ENCODE measurements at regions of chr9 and their contacts with region 1.

Region 1: DNA sequence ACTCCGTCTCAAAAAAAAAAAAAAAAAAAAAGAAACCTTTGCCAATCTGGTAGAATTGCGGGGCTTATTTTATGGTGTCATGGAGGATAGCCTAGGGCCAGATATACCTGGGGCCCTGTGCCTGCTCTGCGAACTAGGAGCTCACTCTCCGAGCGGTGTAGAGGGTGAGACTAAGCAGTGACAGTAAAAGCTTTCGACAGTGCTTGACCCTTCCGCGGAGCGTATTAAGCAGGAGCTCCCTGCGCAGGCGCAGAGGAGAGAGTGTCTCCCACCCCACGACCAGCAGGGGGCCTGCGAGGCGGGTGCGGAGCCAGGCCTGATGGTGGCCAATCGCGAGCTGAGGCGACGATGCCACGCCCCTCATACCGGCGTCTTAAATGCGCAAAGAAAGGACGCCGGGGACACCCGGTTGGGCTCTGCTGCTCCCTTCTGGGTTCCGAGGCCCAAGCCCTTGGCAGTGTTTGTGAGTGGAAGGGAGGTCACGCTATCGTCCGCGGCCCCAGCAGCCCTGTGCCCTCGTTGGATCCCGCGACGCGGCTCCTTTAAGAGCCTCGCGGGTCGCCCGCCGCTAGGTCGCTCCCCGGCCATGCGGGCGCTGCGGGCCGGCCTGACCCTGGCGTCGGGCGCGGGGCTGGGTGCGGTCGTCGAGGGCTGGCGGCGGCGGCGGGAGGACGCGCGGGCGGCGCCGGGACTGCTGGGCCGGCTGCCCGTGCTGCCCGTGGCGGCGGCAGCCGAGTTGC is at the start of gene ENDOG:
- DNase-seq: peak; percentile 98
- H3K4me3 Mint-ChIP-seq: peak within 1 kb of the TSS; percentile 82
- H3K27ac Mint-ChIP-seq: peak within 1 kb of the TSS; percentile 24
- H3K4me1 Mint-ChIP-seq: peaks cover 22% of the 10 kb centered on the region
- H3K27me3 Mint-ChIP-seq: no peaks in the 10 kb centered on the region
- total RNA-seq, gene ENDOG: 9.9 to 10.3 TPM

Region 2: DNA sequence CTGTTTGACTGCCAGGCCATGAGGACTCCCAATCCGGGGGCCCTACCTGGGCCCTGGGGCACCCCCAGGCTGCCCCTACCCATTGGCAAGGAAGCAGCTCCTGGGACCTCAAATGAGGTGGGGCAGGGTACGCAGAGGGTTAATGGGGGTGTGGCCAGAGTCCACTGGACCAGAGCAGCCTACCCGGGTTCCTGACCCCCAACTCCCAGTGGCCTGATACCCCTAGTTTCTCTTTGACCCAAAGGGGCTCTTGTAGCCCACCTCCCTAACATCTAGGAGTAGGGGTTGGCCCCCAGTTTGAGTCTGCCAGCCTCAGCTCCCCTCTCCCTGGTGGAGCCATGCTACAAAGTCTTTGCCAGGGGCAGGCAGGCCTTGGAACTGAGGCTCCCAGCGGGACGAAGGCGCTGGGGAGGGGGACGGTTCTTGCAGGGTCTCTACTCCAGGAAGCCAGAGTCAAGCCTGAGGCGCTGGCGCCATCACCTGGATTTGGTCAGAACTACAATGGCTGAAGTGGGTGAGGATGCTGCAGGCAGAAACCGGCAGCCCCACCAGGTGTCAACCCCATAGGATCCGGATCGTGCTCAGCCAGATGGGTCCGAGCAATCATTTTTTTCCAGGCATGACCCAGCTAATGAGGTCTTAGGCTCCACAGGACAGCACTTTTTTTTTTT is 406.0 kb before region 1 on chr9:
- CTCF ChIA-PET with region 1: no interaction called
- intact Hi-C with region 1: no loop called
- DNase-seq: peak; percentile 78
- H3K4me3 Mint-ChIP-seq: no peak overlapping the region
- H3K27ac Mint-ChIP-seq: no peak overlapping the region
- H3K4me1 Mint-ChIP-seq: no peaks in the 10 kb centered on the region
- H3K27me3 Mint-ChIP-seq: peaks cover 51% of the 10 kb centered on the region

Region 3: DNA sequence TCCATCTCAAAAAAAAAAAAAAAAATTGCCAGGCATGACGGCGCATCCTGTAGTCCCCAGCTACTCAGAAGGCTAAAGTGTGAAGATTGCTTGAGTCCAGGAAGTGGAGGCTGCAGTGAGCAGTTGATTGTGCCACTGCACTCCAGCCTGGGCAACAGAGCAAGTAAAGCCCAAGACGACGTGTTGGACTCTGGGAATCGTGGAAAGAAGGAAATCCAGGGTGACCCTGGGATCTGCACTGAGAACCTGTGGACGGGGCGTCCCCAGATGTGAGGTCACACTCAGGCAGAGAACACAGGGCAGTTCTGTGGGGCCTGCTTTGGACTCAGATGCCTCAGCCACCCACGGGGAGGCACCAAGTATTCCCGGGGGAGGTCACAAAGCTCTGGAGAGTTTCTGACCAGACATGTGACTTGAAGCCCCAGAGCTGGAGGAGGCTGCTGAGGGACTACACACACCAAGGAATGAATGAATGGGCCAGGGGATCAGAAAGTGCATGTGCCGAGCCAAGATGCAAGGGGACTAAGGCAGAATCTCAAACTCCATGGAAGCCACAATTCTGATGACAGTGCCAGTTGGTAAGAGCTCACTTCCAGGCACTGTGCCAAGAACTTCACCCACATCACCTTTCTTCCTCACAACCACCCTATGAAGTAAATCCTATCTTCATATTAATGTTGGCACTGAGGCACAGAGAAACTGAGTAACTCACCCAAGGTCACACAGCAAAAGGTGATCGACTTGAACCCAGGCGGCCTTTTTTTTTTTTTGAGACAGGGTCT is 174.6 kb before region 1 on chr9:
- CTCF ChIA-PET with region 1: interaction called, 6 read pairs
- intact Hi-C with region 1: loop called (anchors 2 kb)
- DNase-seq: no peak
- H3K4me3 Mint-ChIP-seq: no peak overlapping the region
- H3K27ac Mint-ChIP-seq: no peak overlapping the region
- H3K4me1 Mint-ChIP-seq: no peaks in the 10 kb centered on the region
- H3K27me3 Mint-ChIP-seq: no peaks in the 10 kb centered on the region

Region 4: DNA sequence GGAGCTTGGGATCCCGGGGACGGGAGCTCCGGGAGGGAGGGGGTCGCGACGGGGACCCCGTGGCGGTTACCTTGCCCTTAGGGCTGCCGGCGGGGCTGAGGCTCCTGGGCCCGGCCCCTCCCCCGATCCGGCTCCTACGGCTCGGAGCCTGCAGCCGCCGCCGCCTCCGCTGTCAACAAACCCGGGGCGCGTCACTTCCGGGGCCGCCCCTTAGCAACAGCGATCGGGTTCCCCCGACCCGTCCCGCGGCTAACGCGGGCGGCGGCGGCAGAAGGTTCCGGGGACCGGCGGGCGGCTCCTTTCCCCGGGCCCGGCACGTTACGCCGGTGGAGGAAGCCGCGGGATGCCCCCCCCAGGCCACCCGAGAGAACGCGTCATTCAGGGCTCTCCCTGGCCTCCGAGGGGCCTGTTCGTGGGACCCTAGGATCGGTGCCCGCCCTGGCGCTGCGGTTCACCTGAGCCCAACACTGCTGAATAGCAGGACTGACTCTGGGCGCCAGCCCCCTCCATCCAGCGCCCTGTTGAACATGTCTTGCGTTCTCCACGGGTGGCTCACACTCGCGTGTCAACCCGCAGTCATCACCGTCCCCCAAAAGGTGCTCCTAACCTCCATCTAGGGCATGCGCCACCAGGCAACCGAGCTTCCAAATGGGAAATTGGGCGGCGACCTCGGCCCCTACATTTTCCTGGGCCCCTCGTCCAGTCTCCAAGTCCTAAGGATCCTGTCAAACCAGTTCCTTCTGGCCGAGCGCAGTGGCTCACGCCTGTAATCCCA is 46.3 kb before region 1 on chr9 and contains the start of gene ZER1:
- CTCF ChIA-PET with region 1: interaction called, 4 read pairs
- intact Hi-C with region 1: loop called (anchors 1 kb)
- DNase-seq: peak; percentile 95
- H3K4me3 Mint-ChIP-seq: peak within 1 kb of the TSS; percentile 95
- H3K27ac Mint-ChIP-seq: peak within 1 kb of the TSS; percentile 90
- H3K4me1 Mint-ChIP-seq: peaks cover 24% of the 10 kb centered on the region
- H3K27me3 Mint-ChIP-seq: no peaks in the 10 kb centered on the region
- total RNA-seq, gene ZER1: 9.9 to 11.0 TPM

Region 5: GRCh38 chr9:128902351-128903078 is 84.2 kb after region 1 on chr9:
- CTCF ChIA-PET with region 1: no interaction called
- intact Hi-C with region 1: no loop called
- DNase-seq: peak; percentile 95
- H3K4me3 Mint-ChIP-seq: peak overlapping the region; percentile 27
- H3K27ac Mint-ChIP-seq: peak overlapping the region; percentile 75
- H3K4me1 Mint-ChIP-seq: peaks cover 70% of the 10 kb centered on the region
- H3K27me3 Mint-ChIP-seq: no peaks in the 10 kb centered on the region

Region 6: GRCh38 chr9:128927731-128928411 is 109.6 kb after region 1 on chr9:
- CTCF ChIA-PET with region 1: interaction called, 18 read pairs
- intact Hi-C with region 1: loop called (anchors 1 kb)
- DNase-seq: peak; percentile 68
- H3K4me3 Mint-ChIP-seq: no peak overlapping the region
- H3K27ac Mint-ChIP-seq: no peak overlapping the region
- H3K4me1 Mint-ChIP-seq: peaks cover 10% of the 10 kb centered on the region
- H3K27me3 Mint-ChIP-seq: no peaks in the 10 kb centered on the region

Region 7: DNA sequence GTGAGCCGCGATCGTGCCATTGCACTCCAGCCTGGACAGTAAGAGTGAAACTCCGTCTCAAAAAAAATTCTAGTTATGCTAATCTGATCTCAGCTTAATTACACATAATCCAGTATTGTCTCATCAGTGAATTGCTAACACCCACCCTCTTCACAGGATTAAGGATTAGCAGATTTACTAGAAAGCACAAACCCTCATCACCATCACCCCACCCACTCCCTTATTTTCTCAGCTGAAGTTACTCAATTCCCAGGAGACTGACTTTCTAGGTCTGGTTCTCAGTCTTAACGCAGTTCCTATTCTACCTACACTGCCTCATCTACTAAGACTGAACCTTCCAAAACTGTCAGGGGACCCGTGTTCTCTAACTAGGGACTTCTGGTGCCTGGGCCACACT is 993.7 kb after region 1 on chr9:
- CTCF ChIA-PET with region 1: no interaction called
- intact Hi-C with region 1: no loop called
- DNase-seq: no peak
- H3K4me3 Mint-ChIP-seq: no peak overlapping the region
- H3K27ac Mint-ChIP-seq: peak overlapping the region; percentile 5
- H3K4me1 Mint-ChIP-seq: peaks cover 8% of the 10 kb centered on the region
- H3K27me3 Mint-ChIP-seq: no peaks in the 10 kb centered on the region

Region 8: GRCh38 chr9:130578865-130579737 is 1760.8 kb after region 1 on chr9 and contains the start of gene FUBP3:
- CTCF ChIA-PET with region 1: no interaction called
- intact Hi-C with region 1: loop called (anchors 5 kb)
- DNase-seq: peak; percentile 95
- H3K4me3 Mint-ChIP-seq: peak within 1 kb of the TSS; percentile 87
- H3K27ac Mint-ChIP-seq: peak within 1 kb of the TSS; percentile 84
- H3K4me1 Mint-ChIP-seq: peaks cover 39% of the 10 kb centered on the region
- H3K27me3 Mint-ChIP-seq: no peaks in the 10 kb centered on the region
- total RNA-seq, gene FUBP3: 29.8 to 32.8 TPM

Measured in activated naive CD4-positive, alpha-beta T cell treated with anti-CD3 and anti-CD28 coated beads for 36 hours (primary cell).